HEK293 (cell line): ENCODE measurements at regions of chr4 and their contacts with region 1.

Region 1: GRCh38 chr4:180565856-180566431 is 1677.3 kb upstream of the TENM3 start:
- H3K4me3 ChIP-seq: no peak overlapping the region
- H3K27ac ChIP-seq: no peak overlapping the region
- H3K4me1 ChIP-seq: no peaks in the 10 kb centered on the region
- CTCF ChIP-seq: no peak

Region 2: DNA sequence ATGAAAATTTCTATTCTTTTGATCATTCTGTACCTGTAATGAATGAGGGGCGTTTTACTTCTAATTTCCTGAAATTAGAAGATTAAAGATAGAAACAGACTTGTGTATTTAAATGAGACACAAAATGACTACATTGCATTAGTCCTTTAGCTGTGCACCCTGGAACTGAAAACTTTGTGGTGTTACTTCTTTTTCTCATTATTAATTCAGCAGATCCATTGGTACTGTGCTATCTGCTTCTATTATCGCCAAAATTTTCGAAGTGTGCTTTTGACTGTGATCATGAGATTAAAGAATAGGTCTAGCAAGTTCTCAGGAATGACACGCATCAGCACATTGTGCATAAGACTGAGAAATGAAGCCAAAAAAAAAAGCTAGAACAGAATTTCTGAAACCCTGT is 261.6 kb before region 1 on chr4:
- CTCF ChIA-PET with region 1: no interaction called
- POLR2A ChIA-PET with region 1: no interaction called
- H3K4me3 ChIP-seq: no peak overlapping the region
- H3K27ac ChIP-seq: no peak overlapping the region
- H3K4me1 ChIP-seq: no peaks in the 10 kb centered on the region
- CTCF ChIP-seq: no peak

Region 3: GRCh38 chr4:180550106-180550505 is 15.8 kb before region 1 on chr4:
- CTCF ChIA-PET with region 1: interaction called, 10 read pairs
- POLR2A ChIA-PET with region 1: no interaction called
- H3K4me3 ChIP-seq: no peak overlapping the region
- H3K27ac ChIP-seq: no peak overlapping the region
- H3K4me1 ChIP-seq: no peaks in the 10 kb centered on the region
- CTCF ChIP-seq: no peak